Dorsolateral prefrontal cortex (tissue), 120 donors: ENCODE measurements at regions of chr5 and their contacts with region 1.

Region 1: GRCh38 chr5:38994324-38994927 is 79.8 kb downstream of the RICTOR start:
- DNase-seq: peak in 1 of 10 donors; percentile 9
- H3K4me3 ChIP-seq: no peak overlapping the region
- H3K27ac ChIP-seq: peak overlapping the region in 5 of 59 donors; percentile 2 to 36 (median 27)
- H3K27me3 ChIP-seq: no peaks in the 10 kb centered on the region
- CTCF ChIP-seq: peak in 54 of 56 donors; percentile 32 to 76 (median 56)

Region 2: GRCh38 chr5:39080597-39081204 is 86.3 kb after region 1 on chr5:
- intact Hi-C with region 1: loop called in 1 of 2 experiments (anchors 5 kb)
- DNase-seq: peak in 4 of 10 donors; percentile 28 to 48 (median 38)
- H3K4me3 ChIP-seq: peak overlapping the region in 13 of 59 donors; percentile 2 to 31 (median 14)
- H3K27ac ChIP-seq: peak overlapping the region in 18 of 59 donors; percentile 15 to 100 (median 99)
- H3K27me3 ChIP-seq: no peaks in the 10 kb centered on the region
- CTCF ChIP-seq: peak; percentile 73 to 94 (median 84)

Region 3: DNA sequence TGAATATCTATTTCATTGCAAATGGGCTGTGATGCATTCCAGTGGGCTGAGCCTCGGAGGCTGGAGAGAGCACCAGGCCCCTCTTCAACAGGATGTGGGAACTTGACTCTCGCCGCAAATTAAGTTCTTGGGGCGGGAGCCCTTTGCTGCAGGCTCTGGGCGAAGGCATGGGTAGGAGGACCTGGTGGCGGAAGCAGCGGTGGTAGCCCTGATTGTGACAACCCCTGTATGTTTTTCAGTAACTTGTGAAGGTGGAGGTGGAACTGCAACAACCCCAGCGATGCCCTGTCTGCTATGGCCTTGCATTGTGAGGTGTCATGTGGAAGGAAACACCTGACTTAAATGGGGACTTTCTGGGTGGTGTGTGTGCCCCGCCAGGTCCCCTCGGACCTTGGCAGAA is 215.5 kb after region 1 on chr5:
- intact Hi-C with region 1: loop called in 1 of 2 experiments (anchors 10 kb)
- DNase-seq: no peak
- H3K4me3 ChIP-seq: no peak overlapping the region
- H3K27ac ChIP-seq: no peak overlapping the region
- H3K27me3 ChIP-seq: peaks cover 0 to 8% (median 0%) of the 10 kb centered on the region in 45 donors
- CTCF ChIP-seq: no peak